ENCODE measurements at regions of chr17 and their contacts with region 1.

Region 1: DNA sequence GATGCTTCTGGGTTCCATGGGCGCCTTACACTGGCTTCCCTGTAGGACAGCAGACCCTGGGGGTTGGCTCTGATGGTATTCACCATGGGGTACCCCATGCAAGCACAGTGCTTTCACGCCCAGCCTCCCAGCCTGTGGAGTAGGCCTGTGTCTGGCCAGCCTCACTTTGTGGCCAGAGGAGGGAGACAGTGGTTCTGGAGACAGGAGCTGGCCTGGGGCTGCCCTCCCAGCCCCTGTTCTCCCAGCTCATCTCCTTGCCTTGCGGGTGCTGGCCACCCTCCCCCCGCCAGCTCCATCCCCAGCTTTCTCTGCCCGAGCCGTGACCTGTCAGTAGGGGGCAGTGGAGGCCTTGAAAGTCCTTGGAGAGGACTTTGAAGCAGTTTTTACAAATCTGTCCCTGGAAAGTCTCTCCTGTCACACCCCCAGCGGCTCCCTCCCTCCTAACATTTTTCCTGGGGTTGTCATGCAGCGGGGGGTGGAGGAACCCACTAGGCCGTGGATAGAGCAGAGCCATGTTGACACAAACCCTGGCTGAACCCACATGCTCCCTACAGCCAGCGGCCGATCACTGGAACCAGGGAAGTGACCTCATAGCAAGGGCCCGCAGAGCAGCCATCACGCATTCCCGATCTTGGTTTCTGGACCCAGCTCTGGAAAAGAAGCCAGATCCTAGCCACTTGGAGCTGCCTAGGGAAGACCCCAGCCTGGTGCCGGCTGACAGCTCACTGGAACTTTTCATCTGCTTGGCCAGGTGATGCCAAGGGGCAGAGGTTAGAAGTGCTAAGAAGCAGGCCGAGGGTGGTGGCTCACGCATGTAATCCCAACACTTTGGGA is 289.4 kb downstream of the SEC14L1 start:
- DNase-seq: peak; percentile 97
- H3K4me3 ChIP-seq: no peak overlapping the region
- CTCF ChIP-seq: peak; percentile 77

Region 2: GRCh38 chr17:77322514-77323412 is 107.4 kb before region 1 on chr17:
- CTCF ChIA-PET with region 1: interaction called, 20 read pairs
- POLR2A ChIA-PET with region 1: interaction called, 4 read pairs
- DNase-seq: peak; percentile 97
- H3K4me3 ChIP-seq: peak overlapping the region; percentile 72
- CTCF ChIP-seq: no peak

Region 3: DNA sequence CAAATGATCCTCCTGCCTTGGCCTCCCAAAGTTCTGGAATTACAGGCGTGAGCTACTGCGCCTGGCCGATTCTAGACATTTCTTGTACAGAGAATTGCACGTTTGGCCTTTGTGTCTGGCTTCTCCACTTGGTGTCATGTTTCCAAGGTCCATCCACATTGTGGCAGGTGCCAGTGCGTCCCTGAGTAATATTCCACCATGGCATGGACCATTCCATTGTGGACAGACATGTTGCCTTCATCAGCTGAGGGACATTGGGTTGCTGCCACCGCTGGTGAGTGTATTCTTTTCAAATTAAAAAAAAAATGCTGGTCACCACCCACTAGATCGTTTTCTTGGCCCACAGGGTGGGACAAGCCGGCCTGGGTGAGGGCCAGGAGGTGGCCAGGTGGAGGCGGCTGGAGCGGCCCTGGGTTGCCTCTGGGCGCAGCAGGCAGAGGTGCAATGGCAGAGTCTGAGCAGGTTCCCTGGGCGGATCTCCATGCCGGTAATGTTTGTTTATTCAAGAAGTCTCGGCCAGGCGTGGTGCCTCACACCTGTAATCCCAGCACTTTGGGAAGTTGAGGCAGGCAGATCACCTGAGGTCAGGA is 15.2 kb before region 1 on chr17:
- CTCF ChIA-PET with region 1: interaction called, 25 read pairs
- POLR2A ChIA-PET with region 1: interaction called, 4 read pairs
- DNase-seq: no peak
- H3K4me3 ChIP-seq: no peak overlapping the region
- CTCF ChIP-seq: no peak

Region 4: GRCh38 chr17:77451245-77451893 is 21.2 kb after region 1 on chr17:
- CTCF ChIA-PET with region 1: interaction called, 18 read pairs
- POLR2A ChIA-PET with region 1: interaction called, 6 read pairs
- DNase-seq: no peak
- H3K4me3 ChIP-seq: peak overlapping the region; percentile 54
- CTCF ChIP-seq: no peak

Region 5: GRCh38 chr17:77494664-77495435 is 64.7 kb after region 1 on chr17:
- CTCF ChIA-PET with region 1: interaction called, 65 read pairs
- POLR2A ChIA-PET with region 1: interaction called, 3 read pairs
- DNase-seq: no peak
- H3K4me3 ChIP-seq: no peak overlapping the region
- CTCF ChIP-seq: peak; percentile 87

Measured in AG04449 (cell line).